CD8-positive, alpha-beta T cell (primary cell): ENCODE measurements at regions of chr2 and their contacts with region 1.

Region 1: DNA sequence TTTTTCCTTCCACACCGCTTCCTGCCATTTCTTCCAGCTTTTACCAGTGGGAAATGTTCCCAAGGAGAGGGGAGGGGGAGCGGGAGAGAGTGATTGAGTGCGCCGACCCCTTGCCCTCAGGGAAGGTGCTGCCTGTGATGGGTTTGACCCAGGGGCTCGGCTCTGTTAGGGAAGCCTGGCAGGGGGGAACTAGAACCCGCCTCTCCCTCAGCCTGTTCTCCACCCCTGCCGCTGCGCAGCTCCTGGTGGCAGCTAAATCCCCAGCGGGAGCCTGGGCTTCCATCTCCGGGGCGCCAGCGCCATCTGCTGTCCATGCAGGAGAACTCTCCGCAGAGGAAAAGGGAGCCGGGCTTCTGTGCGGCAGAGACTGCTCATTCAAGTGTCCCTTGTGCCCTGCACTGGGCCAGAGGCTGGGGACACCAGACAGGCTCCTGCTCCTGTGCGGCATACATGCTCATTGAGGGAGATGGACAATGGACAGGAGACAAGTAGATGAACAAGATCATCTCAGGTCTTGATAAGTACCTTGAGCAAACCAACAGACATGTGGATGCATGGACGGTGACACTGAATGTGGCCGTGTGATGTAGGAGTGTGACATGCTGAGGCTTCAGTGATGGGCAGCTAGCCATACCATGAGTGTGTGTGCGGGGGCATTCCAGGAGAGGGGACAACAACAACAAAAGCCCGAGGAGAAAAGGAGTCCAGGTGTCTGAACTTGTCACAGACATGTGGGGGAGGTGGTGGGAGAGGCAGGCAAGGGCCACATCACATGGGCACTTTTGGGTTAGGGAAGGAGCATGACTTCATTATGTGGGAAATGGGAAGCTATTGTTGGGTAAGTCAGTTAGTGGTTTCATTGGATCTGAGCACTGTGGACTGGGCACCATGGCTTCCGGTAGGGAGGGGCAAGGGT is 13.3 kb downstream of the CHPF start:
- DNase-seq: peak; percentile 73 to 92 (median 85)
- ATAC-seq: peak; percentile 98
- H3K4me3 ChIP-seq: no peak overlapping the region
- H3K4me3 Mint-ChIP-seq: no peak overlapping the region
- H3K27ac ChIP-seq: no peak overlapping the region
- H3K27ac Mint-ChIP-seq: no peak overlapping the region
- H3K4me1 ChIP-seq: no peaks in the 10 kb centered on the region
- H3K4me1 Mint-ChIP-seq: peaks cover 3% of the 10 kb centered on the region
- H3K27me3 ChIP-seq: peaks cover 6 to 9% of the 10 kb centered on the region in 2 experiments
- H3K27me3 Mint-ChIP-seq: peaks cover 67% of the 10 kb centered on the region
- CTCF ChIP-seq: peak; percentile 98

Region 2: GRCh38 chr2:219430633-219431615 is 99.4 kb before region 1 on chr2:
- CTCF ChIA-PET with region 1: interaction called, 46 read pairs
- POLR2A ChIA-PET with region 1: no interaction called
- intact Hi-C with region 1: loop called (anchors 1 kb)
- DNase-seq: peak in 2 of 9 experiments; percentile 29 to 47
- ATAC-seq: peak; percentile 57
- H3K4me3 ChIP-seq: no peak overlapping the region
- H3K4me3 Mint-ChIP-seq: no peak overlapping the region
- H3K27ac ChIP-seq: no peak overlapping the region
- H3K27ac Mint-ChIP-seq: no peak overlapping the region
- H3K4me1 ChIP-seq: no peaks in the 10 kb centered on the region
- H3K4me1 Mint-ChIP-seq: peaks cover 6% of the 10 kb centered on the region
- H3K27me3 ChIP-seq: peaks cover 0 to 14% of the 10 kb centered on the region in 2 experiments
- H3K27me3 Mint-ChIP-seq: peaks cover 16% of the 10 kb centered on the region
- CTCF ChIP-seq: peak; percentile 24

Region 3: GRCh38 chr2:219475697-219476651 is 54.3 kb before region 1 on chr2:
- CTCF ChIA-PET with region 1: interaction called, 21 read pairs
- POLR2A ChIA-PET with region 1: no interaction called
- intact Hi-C with region 1: loop called (anchors 1 kb)
- DNase-seq: peak in 7 of 9 experiments; percentile 32 to 70 (median 60)
- ATAC-seq: peak; percentile 77
- H3K4me3 ChIP-seq: no peak overlapping the region
- H3K4me3 Mint-ChIP-seq: no peak overlapping the region
- H3K27ac ChIP-seq: no peak overlapping the region
- H3K27ac Mint-ChIP-seq: no peak overlapping the region
- H3K4me1 ChIP-seq: no peaks in the 10 kb centered on the region
- H3K4me1 Mint-ChIP-seq: peaks cover 4% of the 10 kb centered on the region
- H3K27me3 ChIP-seq: no peaks in the 10 kb centered on the region
- H3K27me3 Mint-ChIP-seq: peaks cover 3% of the 10 kb centered on the region
- CTCF ChIP-seq: peak; percentile 58

Region 4: GRCh38 chr2:219498280-219499057 is 31.8 kb before region 1 on chr2 and contains the start of gene GMPPA:
- CTCF ChIA-PET with region 1: interaction called, 151 read pairs
- POLR2A ChIA-PET with region 1: interaction called, 3 read pairs
- intact Hi-C with region 1: loop called in 1 of 2 experiments (anchors 1 kb)
- DNase-seq: peak; percentile 82 to 95 (median 89)
- ATAC-seq: peak; percentile 90
- H3K4me3 ChIP-seq: peak within 1 kb of the TSS; percentile 75 to 83
- H3K4me3 Mint-ChIP-seq: peak within 1 kb of the TSS; percentile 89
- H3K27ac ChIP-seq: peak within 1 kb of the TSS; percentile 52 to 59
- H3K27ac Mint-ChIP-seq: peak within 1 kb of the TSS; percentile 84
- H3K4me1 ChIP-seq: peaks cover 39% of the 10 kb centered on the region
- H3K4me1 Mint-ChIP-seq: peaks cover 35% of the 10 kb centered on the region
- H3K27me3 ChIP-seq: peaks cover 25 to 34% of the 10 kb centered on the region in 2 experiments
- H3K27me3 Mint-ChIP-seq: peaks cover 33% of the 10 kb centered on the region
- CTCF ChIP-seq: no peak
- total RNA-seq, gene GMPPA: 9.4 to 15.0 TPM